RWPE1 (cell line): ENCODE measurements at regions of chr10 and their contacts with region 1.

Region 1: DNA sequence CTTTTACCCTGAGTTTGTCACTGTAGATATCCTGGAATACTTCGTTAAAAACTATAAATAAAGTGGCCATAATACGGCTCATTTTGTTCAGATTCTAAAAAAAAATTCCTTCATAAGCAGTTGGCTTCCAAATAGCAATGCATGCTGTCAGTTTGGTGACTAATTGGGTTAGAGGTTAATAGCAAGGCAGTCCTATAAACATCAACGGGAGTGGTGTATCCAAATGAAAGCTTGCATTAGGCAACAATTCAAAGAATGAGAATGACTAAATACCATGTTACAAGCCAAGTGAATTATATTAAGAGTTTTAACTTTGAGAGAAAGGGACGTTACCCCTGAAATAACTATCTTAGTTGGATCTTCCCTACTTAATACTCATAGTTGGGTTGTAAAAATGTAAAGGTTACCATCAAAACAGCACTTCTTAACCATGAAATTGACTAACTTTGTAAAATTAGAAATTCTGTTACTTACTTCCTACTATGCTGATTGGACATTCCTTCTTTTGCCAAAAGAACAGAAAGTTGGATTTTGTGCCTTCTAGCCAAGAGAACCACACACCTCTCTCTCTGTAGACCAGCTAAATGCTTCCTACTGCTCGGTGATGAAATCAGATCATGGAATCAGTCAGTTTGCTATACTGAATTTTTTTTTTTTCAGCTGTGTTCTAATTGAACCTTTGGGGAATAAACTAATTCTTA is 98.0 kb downstream of the KAT6B start:
- DNase-seq: peak; percentile 96
- H3K27ac ChIP-seq: peak overlapping the region; percentile 92
- CTCF ChIP-seq: no peak

Region 2: DNA sequence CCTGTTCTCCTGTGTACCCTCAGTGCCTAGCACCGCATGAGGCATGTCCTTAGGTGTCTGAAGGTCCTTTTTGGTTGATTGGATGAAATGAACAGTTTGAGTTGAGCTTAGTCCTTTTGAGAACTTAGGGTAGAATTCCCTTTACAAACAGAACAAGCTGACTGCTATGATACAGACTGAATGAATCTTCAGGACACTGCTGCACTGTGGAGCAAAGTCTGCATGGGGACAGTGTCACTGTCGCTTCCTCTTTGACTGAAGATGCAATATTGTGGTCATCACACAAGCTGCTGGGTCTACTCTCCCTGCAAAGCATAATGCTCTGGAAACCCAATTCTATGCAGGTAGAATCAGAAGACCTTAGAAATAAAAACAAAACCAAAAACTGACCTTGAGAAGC is 1022.0 kb before region 1 on chr10:
- CTCF ChIA-PET with region 1: no interaction called
- POLR2A ChIA-PET with region 1: interaction called, 10 read pairs
- DNase-seq: no peak
- H3K27ac ChIP-seq: no peak overlapping the region
- CTCF ChIP-seq: no peak